IMR-90 (cell line): ENCODE measurements at regions of chr10 and their contacts with region 1.

Region 1: DNA sequence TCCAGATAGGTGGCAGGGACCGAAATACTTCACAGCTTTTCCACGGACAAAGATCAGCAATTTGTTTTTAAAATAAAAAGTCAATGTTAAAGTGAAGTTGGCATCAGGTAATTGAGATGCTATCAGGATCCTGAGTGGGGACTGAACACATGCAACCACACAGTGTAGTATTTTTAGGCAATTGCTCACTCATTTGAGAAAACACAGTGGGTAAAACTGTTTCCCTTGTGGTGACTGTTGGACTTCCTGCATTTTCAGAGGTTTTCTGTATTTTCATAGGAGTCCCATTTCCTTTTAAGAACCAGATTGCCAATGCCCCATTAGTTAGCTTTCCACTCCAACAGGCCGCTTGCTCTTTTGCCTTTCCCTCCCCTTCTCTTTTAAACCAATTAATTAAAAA is 159.5 kb upstream of the ZNF32 start:
- DNase-seq: peak; percentile 14
- ATAC-seq: no peak
- H3K4me3 ChIP-seq: no peak overlapping the region
- H3K27ac ChIP-seq: no peak overlapping the region
- H3K4me1 ChIP-seq: peaks cover 5% of the 10 kb centered on the region
- H3K27me3 ChIP-seq: peaks cover 12% of the 10 kb centered on the region; the same call in 1 of the 2 replicates
- CTCF ChIP-seq: no peak
- POLR2A ChIP-seq: no peak
- RAD21 ChIP-seq: no peak

Region 2: GRCh38 chr10:44300666-44301649 is 492.8 kb after region 1 on chr10:
- CTCF ChIA-PET with region 1: no interaction called
- POLR2A ChIA-PET with region 1: no interaction called
- dilution Hi-C with region 1: no loop called
- in situ Hi-C with region 1: no loop called
- intact Hi-C with region 1: loop called (anchors 10 kb)
- DNase-seq: peak; percentile 100
- ATAC-seq: peak; percentile 88
- H3K4me3 ChIP-seq: no peak overlapping the region
- H3K27ac ChIP-seq: no peak overlapping the region
- H3K4me1 ChIP-seq: peaks cover 5% of the 10 kb centered on the region
- H3K27me3 ChIP-seq: no peaks in the 10 kb centered on the region
- CTCF ChIP-seq: no peak
- POLR2A ChIP-seq: no peak
- RAD21 ChIP-seq: no peak